GM13976 (cell line): ENCODE measurements at regions of chr1 and their contacts with region 1.

Region 1: GRCh38 chr1:156129706-156130581 is 15.4 kb downstream of the LMNA start:
- DNase-seq: peak; percentile 80
- CTCF ChIP-seq: peak; percentile 98

Region 2: DNA sequence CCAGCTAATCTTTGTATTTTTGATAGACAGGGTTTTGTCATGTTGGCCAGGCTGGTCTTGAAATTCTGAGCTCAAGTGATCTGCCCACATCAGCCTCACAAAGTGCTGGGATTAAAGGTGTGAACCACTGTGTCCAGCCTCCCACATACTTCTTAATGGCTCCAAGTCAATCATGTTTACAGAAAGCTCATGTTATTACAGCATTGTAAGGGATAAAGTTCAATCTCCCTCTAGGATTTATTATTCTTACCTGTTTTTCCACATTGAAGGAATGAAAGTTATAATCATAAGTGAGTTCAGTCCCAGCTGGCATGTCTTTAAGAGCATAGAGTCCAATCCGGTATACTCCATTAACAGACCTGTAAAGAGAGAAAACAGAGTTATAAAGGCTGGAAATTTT is 769.9 kb before region 1 on chr1:
- in situ Hi-C with region 1: no loop called
- DNase-seq: no peak
- CTCF ChIP-seq: no peak

Region 3: DNA sequence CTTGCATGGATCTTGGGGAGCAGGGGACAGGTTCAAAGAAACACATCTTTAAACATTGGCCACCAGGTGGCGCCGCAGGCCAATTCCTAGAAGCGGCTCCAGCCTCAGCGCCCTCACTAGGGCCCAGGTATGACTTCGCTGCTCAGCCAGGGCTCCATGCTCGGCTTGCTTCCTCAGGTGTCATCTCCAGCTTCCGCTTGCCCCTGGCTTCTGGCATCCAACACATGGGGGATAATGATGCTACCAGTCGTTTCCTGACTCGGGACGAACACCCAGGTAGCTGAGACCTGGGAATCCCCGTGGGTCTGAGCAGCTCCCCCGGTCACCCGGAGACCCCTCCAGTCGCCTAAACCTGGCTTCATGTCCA is 39.1 kb before region 1 on chr1:
- in situ Hi-C with region 1: loop called (anchors 5 kb)
- DNase-seq: peak; percentile 86
- CTCF ChIP-seq: peak; percentile 59

Region 4: GRCh38 chr1:156245451-156246232 is 115.7 kb after region 1 on chr1:
- in situ Hi-C with region 1: no loop called
- DNase-seq: peak; percentile 79
- CTCF ChIP-seq: no peak

Region 5: GRCh38 chr1:156368889-156369684 is 239.1 kb after region 1 on chr1 and contains the start of gene RHBG:
- in situ Hi-C with region 1: no loop called
- DNase-seq: no peak
- CTCF ChIP-seq: no peak

Region 6: DNA sequence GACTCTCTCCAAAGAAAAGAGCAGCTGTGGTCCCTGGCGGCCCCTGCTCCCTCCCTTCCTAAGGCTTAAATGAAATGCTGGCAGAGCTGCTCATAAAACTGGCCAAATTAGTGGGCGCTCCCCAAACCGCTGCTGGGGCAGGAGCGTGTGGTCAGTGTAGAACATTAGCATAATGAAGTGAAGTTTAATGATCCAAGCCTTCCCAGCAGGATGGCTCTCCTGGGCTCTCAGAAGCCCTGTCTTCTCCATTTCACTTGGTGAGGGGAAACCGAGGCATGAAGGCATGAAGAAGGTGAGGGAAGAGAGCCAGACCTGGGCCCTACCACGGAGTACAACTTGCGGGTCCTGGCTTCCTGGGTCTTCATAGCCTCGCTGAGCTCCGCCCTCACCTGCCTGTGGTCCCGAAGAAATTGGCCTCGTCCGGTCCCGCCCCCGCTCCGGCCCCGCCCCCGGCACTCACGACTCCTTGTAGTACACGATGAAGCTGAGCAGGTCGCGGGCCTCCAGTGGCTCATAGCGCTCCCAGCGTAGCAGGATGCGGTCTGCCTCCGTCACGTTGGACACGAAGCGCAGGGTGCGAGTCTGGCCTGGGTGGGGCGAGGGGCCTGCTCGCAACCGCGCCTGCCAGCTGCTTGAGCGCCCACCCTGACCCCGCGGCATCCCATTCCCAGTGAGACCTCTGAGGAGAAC is 718.7 kb after region 1 on chr1:
- in situ Hi-C with region 1: no loop called
- DNase-seq: no peak
- CTCF ChIP-seq: no peak